Naive thymus-derived CD4-positive, alpha-beta T cell (primary cell): ENCODE measurements at regions of chr18 and their contacts with region 1.

Region 1: DNA sequence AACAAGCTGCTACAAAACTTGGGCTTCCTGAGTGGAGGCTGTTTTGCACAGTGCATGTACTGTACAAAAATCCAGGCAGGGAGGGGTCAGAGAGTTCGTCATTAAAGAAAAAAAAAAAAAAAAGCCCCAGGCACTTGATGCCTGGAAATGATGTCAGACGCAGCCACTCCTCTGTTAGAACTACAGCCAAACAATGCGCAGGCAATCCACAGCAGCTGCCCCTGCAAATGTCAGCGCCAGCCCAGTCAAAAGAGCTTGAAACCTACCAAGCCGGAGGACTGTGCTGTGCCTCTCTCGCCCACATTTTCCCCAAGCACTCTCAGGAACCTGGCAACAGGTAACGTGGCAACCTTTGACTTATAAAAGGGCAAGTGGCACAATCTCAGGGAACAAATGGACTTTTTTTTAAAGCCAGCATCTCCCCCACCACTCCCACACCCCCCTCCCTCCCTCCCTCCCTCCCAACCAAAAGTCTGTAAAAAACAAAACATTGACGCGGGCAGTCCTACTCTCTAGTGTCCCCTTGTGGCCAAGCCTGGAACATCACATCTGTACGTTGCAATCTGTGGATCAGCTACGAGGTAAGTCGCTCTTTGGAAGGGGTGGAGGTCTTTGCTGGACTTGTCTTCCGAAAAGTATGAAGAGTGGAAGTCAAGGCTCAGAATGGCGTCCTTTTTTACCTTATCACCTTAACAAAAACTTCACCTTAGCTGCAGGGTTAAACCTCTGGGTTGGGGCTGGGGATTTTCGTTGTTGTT is 144.1 kb downstream of the TGIF1 start:
- DNase-seq: peak; percentile 71 to 96 (median 93)
- ATAC-seq: peak; percentile 82
- H3K4me3 ChIP-seq: peak overlapping the region; percentile 73
- H3K4me3 Mint-ChIP-seq: peak overlapping the region; percentile 84 to 97 (median 93)
- H3K27ac ChIP-seq: peak overlapping the region; percentile 89
- H3K27ac Mint-ChIP-seq: peak overlapping the region; percentile 98 to 100 (median 99)
- H3K4me1 ChIP-seq: peaks cover 31 to 40% of the 10 kb centered on the region in 2 donors
- H3K4me1 Mint-ChIP-seq: peaks cover 32 to 66% (median 57%) of the 10 kb centered on the region in 7 donors
- H3K27me3 ChIP-seq: no peaks in the 10 kb centered on the region
- H3K27me3 Mint-ChIP-seq: no peaks in the 10 kb centered on the region

Region 2: GRCh38 chr18:2958819-2959298 is 635.2 kb before region 1 on chr18:
- CTCF ChIA-PET with region 1: no interaction called
- POLR2A ChIA-PET with region 1: interaction called, 3 read pairs
- intact Hi-C with region 1: loop called (anchors 5 kb)
- DNase-seq: peak in 1 of 9 donors; percentile 61
- ATAC-seq: no peak
- H3K4me3 ChIP-seq: peak overlapping the region; percentile 8
- H3K4me3 Mint-ChIP-seq: peak overlapping the region; percentile 1 to 85 (median 66)
- H3K27ac ChIP-seq: peak overlapping the region; percentile 68
- H3K27ac Mint-ChIP-seq: peak overlapping the region; percentile 96 to 100 (median 99)
- H3K4me1 ChIP-seq: peaks cover 83 to 85% of the 10 kb centered on the region in 2 donors
- H3K4me1 Mint-ChIP-seq: peaks cover 46 to 97% (median 93%) of the 10 kb centered on the region in 7 donors
- H3K27me3 ChIP-seq: no peaks in the 10 kb centered on the region
- H3K27me3 Mint-ChIP-seq: no peaks in the 10 kb centered on the region

Region 3: GRCh38 chr18:3281456-3282400 is 312.4 kb before region 1 on chr18:
- CTCF ChIA-PET with region 1: interaction called, 7 read pairs
- POLR2A ChIA-PET with region 1: interaction called, 4 read pairs
- intact Hi-C with region 1: loop called (anchors 1 kb)
- DNase-seq: peak in 7 of 9 donors; percentile 51 to 77 (median 68)
- ATAC-seq: peak; percentile 93
- H3K4me3 ChIP-seq: no peak overlapping the region
- H3K4me3 Mint-ChIP-seq: no peak overlapping the region
- H3K27ac ChIP-seq: no peak overlapping the region
- H3K27ac Mint-ChIP-seq: no peak overlapping the region
- H3K4me1 ChIP-seq: no peaks in the 10 kb centered on the region
- H3K4me1 Mint-ChIP-seq: peaks cover 0 to 8% (median 0%) of the 10 kb centered on the region in 7 donors
- H3K27me3 ChIP-seq: no peaks in the 10 kb centered on the region
- H3K27me3 Mint-ChIP-seq: no peaks in the 10 kb centered on the region

Region 4: DNA sequence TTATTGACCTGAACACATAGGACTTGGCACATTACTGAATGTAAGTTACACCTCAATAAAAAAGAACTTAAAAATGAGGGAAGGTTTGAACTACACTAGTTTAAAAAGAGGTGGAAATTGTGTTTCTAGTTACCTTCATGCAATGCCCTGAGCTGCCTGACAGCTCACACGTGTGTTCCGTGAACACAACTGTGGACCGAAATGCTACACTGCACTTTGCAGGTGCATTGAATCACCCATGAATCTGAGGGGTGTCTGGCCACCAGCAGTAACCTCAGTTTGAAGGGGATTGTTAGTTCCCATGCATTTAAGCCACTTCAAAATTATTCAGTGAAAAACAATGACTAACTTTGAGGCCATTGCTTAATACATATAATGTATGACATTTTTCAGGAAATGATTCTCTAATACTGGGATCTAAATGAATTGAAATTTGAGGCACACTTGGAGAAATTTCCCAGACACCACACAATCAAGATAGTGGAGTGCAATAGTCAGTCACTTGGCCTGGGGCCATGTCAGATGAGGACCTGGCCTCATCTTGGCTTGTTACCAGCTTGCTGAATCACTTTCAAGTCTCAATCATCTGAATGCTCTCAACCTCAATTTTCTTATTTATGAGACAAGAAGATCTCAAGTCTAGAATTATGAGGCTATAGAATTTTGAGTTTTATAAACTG is 272.8 kb before region 1 on chr18:
- CTCF ChIA-PET with region 1: no interaction called
- POLR2A ChIA-PET with region 1: no interaction called
- intact Hi-C with region 1: loop called in 1 of 2 experiments (anchors 1 kb)
- DNase-seq: no peak
- ATAC-seq: no peak
- H3K4me3 ChIP-seq: no peak overlapping the region
- H3K4me3 Mint-ChIP-seq: no peak overlapping the region
- H3K27ac ChIP-seq: no peak overlapping the region
- H3K27ac Mint-ChIP-seq: no peak overlapping the region
- H3K4me1 ChIP-seq: no peaks in the 10 kb centered on the region
- H3K4me1 Mint-ChIP-seq: peaks cover 0 to 8% (median 0%) of the 10 kb centered on the region in 7 donors
- H3K27me3 ChIP-seq: no peaks in the 10 kb centered on the region
- H3K27me3 Mint-ChIP-seq: peaks cover 4 to 13% (median 6%) of the 10 kb centered on the region in 5 donors

Region 5: GRCh38 chr18:3623769-3624545 is 29.9 kb after region 1 on chr18:
- CTCF ChIA-PET with region 1: no interaction called
- POLR2A ChIA-PET with region 1: interaction called, 3 read pairs
- intact Hi-C with region 1: loop called (anchors 1 to 2 kb)
- DNase-seq: no peak
- ATAC-seq: no peak
- H3K4me3 ChIP-seq: no peak overlapping the region
- H3K4me3 Mint-ChIP-seq: peak overlapping the region in 1 of 10 donors; percentile 67
- H3K27ac ChIP-seq: no peak overlapping the region
- H3K27ac Mint-ChIP-seq: peak overlapping the region in 2 of 9 donors; percentile 32 to 77
- H3K4me1 ChIP-seq: peaks cover 9 to 12% of the 10 kb centered on the region in 2 donors
- H3K4me1 Mint-ChIP-seq: peaks cover 7 to 44% (median 14%) of the 10 kb centered on the region in 7 donors
- H3K27me3 ChIP-seq: no peaks in the 10 kb centered on the region
- H3K27me3 Mint-ChIP-seq: no peaks in the 10 kb centered on the region